ENCODE measurements at regions of chr2 and their contacts with region 1.

Region 1: DNA sequence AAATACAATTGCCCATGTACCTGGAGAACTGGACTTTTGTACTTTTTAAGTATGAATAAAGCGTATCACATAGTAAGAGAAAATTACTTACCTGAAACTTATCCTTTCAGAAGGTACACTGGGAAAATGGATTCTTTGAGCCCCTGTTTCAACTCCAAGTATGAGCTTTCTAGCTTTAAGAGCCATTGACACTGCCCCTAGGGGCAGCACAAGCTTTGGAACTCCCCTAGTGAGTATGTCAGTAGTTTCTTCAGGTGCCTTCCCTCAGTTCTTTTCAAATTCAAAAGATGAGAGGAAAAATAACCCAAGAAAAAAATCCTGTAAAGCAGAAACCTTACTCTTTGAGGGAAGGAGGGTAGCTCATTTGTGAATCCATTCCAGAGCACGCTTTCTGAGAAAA is 124.1 kb downstream of the MEMO1 start:
- DNase-seq: no peak
- H3K4me3 ChIP-seq: no peak overlapping the region
- H3K27ac ChIP-seq: no peak overlapping the region
- H3K4me1 ChIP-seq: no peaks in the 10 kb centered on the region
- H3K27me3 ChIP-seq: no peaks in the 10 kb centered on the region
- CTCF ChIP-seq: peak in 1 of 2 donors; percentile 40

Region 2: DNA sequence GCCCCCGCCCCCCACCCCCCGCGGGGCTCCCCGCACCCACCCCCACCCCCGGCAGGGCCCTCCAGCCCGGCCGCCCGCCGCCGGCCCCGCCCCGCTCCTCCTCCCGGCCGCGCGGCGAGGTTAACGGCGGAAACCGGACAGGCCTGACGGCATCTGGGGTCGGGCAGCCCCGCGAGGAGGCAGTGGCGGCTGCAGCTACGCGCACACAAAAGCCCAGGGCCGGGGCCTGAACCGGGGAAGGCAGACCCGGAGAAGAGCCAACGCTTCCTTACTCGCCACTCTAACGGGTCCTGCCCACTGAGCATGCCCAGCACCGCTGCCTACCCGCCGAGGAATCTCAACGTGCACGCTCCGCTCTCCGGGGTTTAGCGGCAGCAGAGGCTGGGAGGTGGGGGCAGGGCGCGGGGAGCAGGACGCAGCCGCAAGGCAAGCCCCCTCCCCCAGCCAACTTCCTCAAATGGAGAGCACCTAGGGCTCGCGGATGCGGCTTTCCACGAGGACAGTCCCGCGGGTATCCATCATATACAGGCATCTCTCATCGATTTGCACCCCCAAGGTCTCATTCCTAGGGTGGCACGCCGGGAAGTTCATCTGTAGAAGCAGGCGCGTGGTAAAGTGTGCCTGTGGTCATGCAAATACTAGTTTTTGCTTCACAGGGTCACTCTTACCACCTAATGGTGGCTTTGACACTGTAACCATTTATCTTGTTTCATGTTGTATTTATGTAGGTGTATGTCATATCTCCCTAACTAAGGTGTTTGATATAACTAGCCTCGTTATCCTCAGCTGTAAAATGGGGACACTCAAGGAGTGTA is 124.2 kb after region 1 on chr2 and contains the start of gene MEMO1:
- CTCF ChIA-PET with region 1: interaction called, 7 read pairs
- dilution Hi-C with region 1: no loop called
- in situ Hi-C with region 1: no loop called
- intact Hi-C with region 1: loop called (anchors 5 kb)
- DNase-seq: peak; percentile 93
- H3K4me3 ChIP-seq: peak within 1 kb of the TSS; percentile 86 to 98 (median 96)
- H3K27ac ChIP-seq: peak within 1 kb of the TSS; percentile 47
- H3K4me1 ChIP-seq: peaks cover 11% of the 10 kb centered on the region
- H3K27me3 ChIP-seq: no peaks in the 10 kb centered on the region
- CTCF ChIP-seq: peak in 1 of 2 donors; percentile 20
- total RNA-seq, gene MEMO1: 47.8 to 75.3 TPM

Measured in mammary epithelial cell (primary cell).